Motor neuron (in vitro differentiated cells): ENCODE measurements at regions of chr11 and their contacts with region 1.

Region 1: DNA sequence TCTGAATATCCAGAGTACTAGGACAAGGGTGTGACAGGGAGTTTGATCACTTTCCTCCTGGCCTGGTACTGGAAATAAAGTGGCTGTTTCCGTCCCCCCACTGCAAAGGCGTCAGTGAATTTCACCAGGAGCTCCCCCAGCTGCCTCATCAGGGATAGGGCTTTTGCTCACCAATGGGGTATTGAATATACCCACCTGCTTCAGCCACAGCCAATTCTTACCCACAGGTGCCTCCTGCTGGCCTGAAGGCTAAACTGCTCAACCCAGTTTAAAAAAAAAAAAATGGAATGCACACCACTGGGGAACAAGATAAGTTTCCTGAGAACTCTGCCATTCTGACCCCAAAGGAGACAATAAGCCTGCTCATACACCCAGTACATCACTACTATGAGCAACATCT is 65.3 kb upstream of the MS4A8 start:
- ATAC-seq: peak in 3 of 8 experiments; percentile 22 to 42 (median 39)
- H3K4me3 ChIP-seq: no peak overlapping the region
- H3K27ac ChIP-seq: no peak overlapping the region
- H3K4me1 ChIP-seq: no peaks in the 10 kb centered on the region

Region 2: GRCh38 chr11:60739114-60739513 is 105.0 kb after region 1 on chr11:
- in situ Hi-C with region 1: loop called in 1 of 9 experiments (anchors 25 kb)
- ATAC-seq: no peak
- H3K4me3 ChIP-seq: no peak overlapping the region
- H3K27ac ChIP-seq: no peak overlapping the region
- H3K4me1 ChIP-seq: no peaks in the 10 kb centered on the region